AG04450 (cell line): ENCODE measurements at regions of chr15 and their contacts with region 1.

Region 1: GRCh38 chr15:44738340-44738984 is 2.1 kb downstream of the TRIM69 start:
- DNase-seq: peak; percentile 39
- H3K4me3 ChIP-seq: no peak overlapping the region
- H3K27ac ChIP-seq: no peak overlapping the region
- H3K27me3 ChIP-seq: no peaks in the 10 kb centered on the region
- CTCF ChIP-seq: peak; percentile 80

Region 2: DNA sequence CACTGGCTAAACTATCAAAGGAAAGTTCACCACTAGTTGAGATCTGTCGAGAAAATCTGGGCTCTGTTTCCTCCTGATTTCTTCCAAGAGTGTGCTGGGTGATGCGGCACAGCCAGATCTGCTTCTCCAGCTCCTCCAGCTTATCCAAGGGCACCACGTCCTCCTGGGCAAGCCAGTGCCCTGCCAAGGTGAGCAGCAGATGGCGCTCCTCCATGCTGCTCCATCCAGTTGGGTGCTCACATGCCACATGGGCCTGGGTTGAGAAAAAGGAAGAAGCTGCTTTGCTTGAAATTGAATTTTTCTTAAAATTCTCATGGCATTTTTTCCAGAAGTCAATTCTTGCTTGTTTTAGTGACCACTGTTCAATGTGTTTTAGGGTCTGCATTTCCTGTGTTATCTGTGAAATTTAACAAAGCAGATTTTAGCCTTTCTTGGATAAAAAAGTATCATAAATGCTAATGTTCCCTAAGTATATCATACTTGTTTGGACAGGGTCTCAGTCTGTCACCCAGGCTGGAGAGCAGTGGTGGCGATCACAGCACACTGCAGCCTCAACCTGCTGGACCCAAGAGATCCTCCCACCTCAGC is 154.2 kb before region 1 on chr15:
- CTCF ChIA-PET with region 1: interaction called, 77 read pairs
- POLR2A ChIA-PET with region 1: no interaction called
- DNase-seq: no peak
- H3K4me3 ChIP-seq: no peak overlapping the region
- H3K27ac ChIP-seq: no peak overlapping the region
- H3K27me3 ChIP-seq: no peaks in the 10 kb centered on the region
- CTCF ChIP-seq: peak; percentile 29

Region 3: GRCh38 chr15:44593042-44593736 is 145.3 kb before region 1 on chr15:
- CTCF ChIA-PET with region 1: interaction called, 12 read pairs
- POLR2A ChIA-PET with region 1: no interaction called
- DNase-seq: no peak
- H3K4me3 ChIP-seq: no peak overlapping the region
- H3K27ac ChIP-seq: no peak overlapping the region
- H3K27me3 ChIP-seq: no peaks in the 10 kb centered on the region
- CTCF ChIP-seq: peak; percentile 57

Region 4: GRCh38 chr15:44656298-44656697 is 82.2 kb before region 1 on chr15:
- CTCF ChIA-PET with region 1: interaction called, 10 read pairs
- POLR2A ChIA-PET with region 1: interaction called, 4 read pairs
- DNase-seq: no peak
- H3K4me3 ChIP-seq: no peak overlapping the region
- H3K27ac ChIP-seq: no peak overlapping the region
- H3K27me3 ChIP-seq: no peaks in the 10 kb centered on the region
- CTCF ChIP-seq: no peak

Region 5: DNA sequence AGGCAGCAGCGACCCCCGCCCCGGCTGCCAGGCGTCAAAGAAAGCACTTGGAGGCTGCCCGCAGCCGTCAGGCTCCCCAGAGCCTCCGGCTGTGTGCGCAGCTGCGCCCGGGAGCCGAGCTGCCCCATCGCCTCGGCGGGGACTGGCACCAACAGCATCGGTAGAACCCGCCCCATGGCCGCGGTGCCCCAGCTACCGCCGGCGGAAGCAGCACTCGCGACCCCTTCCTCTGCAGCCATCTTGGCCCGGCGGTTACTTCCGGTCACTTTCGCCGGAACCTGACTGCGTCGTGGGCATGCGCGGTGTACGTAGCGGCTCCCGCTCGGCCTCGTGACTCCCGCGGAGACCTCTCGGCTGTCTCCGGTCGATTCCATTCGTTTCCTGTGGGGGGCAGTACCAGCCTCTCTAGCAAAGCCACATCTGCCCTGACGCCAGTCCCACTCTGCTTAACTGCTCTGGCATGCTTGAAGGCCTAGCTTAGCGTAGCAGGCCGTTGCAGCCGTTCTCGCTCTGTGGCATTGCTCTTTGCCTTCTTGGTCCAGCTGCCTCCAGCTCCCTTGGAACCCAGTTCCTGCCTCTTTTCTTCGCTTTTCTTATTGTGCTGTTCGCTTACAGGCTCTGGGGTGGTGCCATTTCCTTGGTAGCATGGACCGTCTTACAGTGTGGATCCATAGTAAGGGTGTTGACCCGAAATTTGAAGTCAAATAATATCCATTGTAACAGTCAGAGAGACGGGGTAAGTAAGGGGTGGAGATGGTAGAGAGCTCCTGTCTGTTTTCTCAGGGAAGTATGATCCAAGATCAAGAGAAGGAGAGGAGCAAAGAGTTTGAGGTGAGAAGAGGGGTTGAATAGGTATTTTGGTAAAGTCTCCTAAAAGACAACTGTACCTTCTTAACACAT is 74.8 kb before region 1 on chr15 and contains the start of gene SPG11:
- CTCF ChIA-PET with region 1: interaction called, 180 read pairs
- POLR2A ChIA-PET with region 1: interaction called, 5 read pairs
- DNase-seq: peak; percentile 96
- H3K4me3 ChIP-seq: peak within 1 kb of the TSS; percentile 91
- H3K27ac ChIP-seq: peak within 1 kb of the TSS; percentile 85
- H3K27me3 ChIP-seq: peaks cover 4% of the 10 kb centered on the region
- CTCF ChIP-seq: peak; percentile 90
- polyA plus RNA-seq, gene SPG11: 39.6 and 48.4 TPM in 2 replicates

Region 6: GRCh38 chr15:44711356-44712107 is 26.9 kb before region 1 on chr15 and contains the start of gene B2M:
- CTCF ChIA-PET with region 1: interaction called, 54 read pairs
- POLR2A ChIA-PET with region 1: interaction called, 35 read pairs
- DNase-seq: peak; percentile 91
- H3K4me3 ChIP-seq: peak within 1 kb of the TSS; percentile 96
- H3K27ac ChIP-seq: peak within 1 kb of the TSS; percentile 93
- H3K27me3 ChIP-seq: no peaks in the 10 kb centered on the region
- CTCF ChIP-seq: no peak
- polyA plus RNA-seq, gene B2M: 5,193 and 5,536 TPM in 2 replicates

Region 7: GRCh38 chr15:44763848-44764247 is 25.4 kb after region 1 on chr15:
- CTCF ChIA-PET with region 1: interaction called, 13 read pairs
- POLR2A ChIA-PET with region 1: no interaction called
- DNase-seq: no peak
- H3K4me3 ChIP-seq: no peak overlapping the region
- H3K27ac ChIP-seq: no peak overlapping the region
- H3K27me3 ChIP-seq: peaks cover 7% of the 10 kb centered on the region
- CTCF ChIP-seq: no peak

Region 8: GRCh38 chr15:44836094-44836493 is 97.6 kb after region 1 on chr15:
- CTCF ChIA-PET with region 1: no interaction called
- POLR2A ChIA-PET with region 1: no interaction called
- DNase-seq: no peak
- H3K4me3 ChIP-seq: no peak overlapping the region
- H3K27ac ChIP-seq: no peak overlapping the region
- H3K27me3 ChIP-seq: no peaks in the 10 kb centered on the region
- CTCF ChIP-seq: no peak